ENCODE measurements at regions of chr16 and their contacts with region 1.

Region 1: GRCh38 chr16:89132291-89133005 is 38.8 kb downstream of the ACSF3 start:
- DNase-seq: no peak
- H3K4me3 ChIP-seq: no peak overlapping the region
- H3K27ac ChIP-seq: no peak overlapping the region
- H3K4me1 ChIP-seq: no peaks in the 10 kb centered on the region
- H3K27me3 ChIP-seq: no peaks in the 10 kb centered on the region
- CTCF ChIP-seq: no peak
- POLR2A ChIP-seq: no peak

Region 2: DNA sequence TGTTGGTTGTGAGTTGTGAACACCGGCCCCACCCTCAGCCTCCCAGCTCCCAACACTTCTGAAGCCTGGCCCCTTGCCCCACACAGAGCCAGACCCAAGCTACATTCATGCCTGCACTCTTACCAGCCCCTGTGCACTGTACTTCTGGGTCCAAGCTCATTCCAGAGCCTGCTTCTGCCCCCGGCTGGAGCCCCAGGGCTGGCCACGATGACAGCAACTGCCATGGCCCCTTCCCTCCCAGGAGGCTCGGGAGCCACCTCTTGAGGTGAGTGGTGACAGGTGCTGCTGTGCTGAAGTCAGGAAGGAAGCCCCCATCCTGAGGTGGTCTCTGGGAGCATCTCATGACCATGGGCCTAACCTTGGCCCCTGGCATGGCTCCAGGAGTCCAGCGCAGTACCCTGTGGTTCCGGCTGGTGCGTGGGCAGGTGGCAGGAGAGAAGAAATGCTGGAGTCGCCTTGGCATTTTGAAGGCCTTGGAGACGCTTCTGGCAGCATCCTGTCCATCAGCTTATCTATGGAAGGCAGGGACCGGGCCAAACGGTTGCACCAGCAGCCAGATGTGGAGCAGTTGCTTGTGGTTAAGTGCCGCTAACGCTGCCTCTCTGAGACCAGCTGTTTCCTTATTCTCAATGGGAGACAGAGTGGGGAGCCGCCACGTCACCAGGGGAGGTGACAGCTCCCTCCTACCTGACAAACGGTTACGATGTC is 332.7 kb before region 1 on chr16:
- CTCF ChIA-PET with region 1: no interaction called
- POLR2A ChIA-PET with region 1: no interaction called
- dilution Hi-C with region 1: no loop called
- intact Hi-C with region 1: no loop called
- DNase-seq: no peak
- H3K4me3 ChIP-seq: no peak overlapping the region
- H3K27ac ChIP-seq: no peak overlapping the region
- H3K4me1 ChIP-seq: peaks cover 5% of the 10 kb centered on the region
- H3K27me3 ChIP-seq: no peaks in the 10 kb centered on the region
- CTCF ChIP-seq: no peak
- POLR2A ChIP-seq: no peak

Region 3: GRCh38 chr16:88967830-88968588 is 164.4 kb before region 1 on chr16:
- CTCF ChIA-PET with region 1: no interaction called
- POLR2A ChIA-PET with region 1: no interaction called
- dilution Hi-C with region 1: loop called (anchors 25 kb)
- intact Hi-C with region 1: no loop called
- DNase-seq: no peak
- H3K4me3 ChIP-seq: no peak overlapping the region
- H3K27ac ChIP-seq: no peak overlapping the region
- H3K4me1 ChIP-seq: no peaks in the 10 kb centered on the region
- H3K27me3 ChIP-seq: no peaks in the 10 kb centered on the region
- CTCF ChIP-seq: no peak
- POLR2A ChIP-seq: no peak

Region 4: GRCh38 chr16:89150090-89150835 is 17.8 kb after region 1 on chr16:
- CTCF ChIA-PET with region 1: no interaction called
- POLR2A ChIA-PET with region 1: no interaction called
- dilution Hi-C with region 1: no loop called
- intact Hi-C with region 1: no loop called
- DNase-seq: no peak
- H3K4me3 ChIP-seq: no peak overlapping the region
- H3K27ac ChIP-seq: no peak overlapping the region
- H3K4me1 ChIP-seq: no peaks in the 10 kb centered on the region
- H3K27me3 ChIP-seq: no peaks in the 10 kb centered on the region
- CTCF ChIP-seq: no peak
- POLR2A ChIP-seq: no peak